ENCODE measurements at regions of chr7 and their contacts with region 1.

Region 1: GRCh38 chr7:28654110-28654509 is 241.8 kb downstream of the CREB5 start:
- DNase-seq: no peak
- H3K4me3 Mint-ChIP-seq: no peak overlapping the region
- H3K27ac Mint-ChIP-seq: no peak overlapping the region
- H3K4me1 Mint-ChIP-seq: no peaks in the 10 kb centered on the region
- H3K27me3 Mint-ChIP-seq: no peaks in the 10 kb centered on the region
- CTCF ChIP-seq: no peak

Region 2: GRCh38 chr7:28643589-28644340 is 10.3 kb before region 1 on chr7:
- CTCF ChIA-PET with region 1: interaction called, 14 read pairs
- intact Hi-C with region 1: no loop called
- DNase-seq: no peak
- H3K4me3 Mint-ChIP-seq: no peak overlapping the region
- H3K27ac Mint-ChIP-seq: no peak overlapping the region
- H3K4me1 Mint-ChIP-seq: peaks cover 15% of the 10 kb centered on the region
- H3K27me3 Mint-ChIP-seq: no peaks in the 10 kb centered on the region
- CTCF ChIP-seq: no peak